ENCODE measurements at regions of chr20 and their contacts with region 1.

Region 1: DNA sequence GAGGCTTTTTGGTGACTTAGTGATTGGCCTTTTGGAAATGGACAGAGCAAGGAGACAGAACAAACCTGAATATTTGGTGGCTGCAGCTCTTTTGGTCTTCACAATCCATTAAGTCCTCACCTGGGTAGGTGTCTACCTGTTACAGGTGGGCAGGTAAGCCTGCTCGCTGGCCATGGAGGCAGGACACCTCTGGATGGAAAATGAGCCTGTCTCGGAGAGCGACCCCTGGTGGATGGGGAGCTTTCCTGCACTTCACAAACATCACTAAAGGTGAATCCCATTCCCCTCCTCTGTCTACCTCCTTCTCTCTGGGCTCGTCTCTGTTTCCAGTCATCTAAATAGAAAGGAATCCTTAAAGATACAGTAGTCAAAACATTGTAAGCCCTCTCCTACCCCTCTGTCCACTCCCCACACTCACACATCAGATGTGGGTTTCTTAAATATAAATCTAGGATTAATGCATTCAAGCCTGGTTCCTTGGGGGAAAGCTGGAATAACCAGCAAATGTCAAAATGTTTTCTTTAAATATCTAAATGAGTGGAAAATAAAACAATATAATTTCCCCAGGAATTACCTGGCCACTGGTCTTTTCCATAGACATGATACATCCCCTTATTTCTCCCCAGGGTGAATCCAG is 304.9 kb downstream of the CDH26 start:
- DNase-seq: peak; percentile 63
- H3K4me3 Mint-ChIP-seq: no peak overlapping the region
- H3K27ac Mint-ChIP-seq: no peak overlapping the region
- H3K4me1 Mint-ChIP-seq: peaks cover 11% of the 10 kb centered on the region
- H3K27me3 Mint-ChIP-seq: no peaks in the 10 kb centered on the region

Region 2: DNA sequence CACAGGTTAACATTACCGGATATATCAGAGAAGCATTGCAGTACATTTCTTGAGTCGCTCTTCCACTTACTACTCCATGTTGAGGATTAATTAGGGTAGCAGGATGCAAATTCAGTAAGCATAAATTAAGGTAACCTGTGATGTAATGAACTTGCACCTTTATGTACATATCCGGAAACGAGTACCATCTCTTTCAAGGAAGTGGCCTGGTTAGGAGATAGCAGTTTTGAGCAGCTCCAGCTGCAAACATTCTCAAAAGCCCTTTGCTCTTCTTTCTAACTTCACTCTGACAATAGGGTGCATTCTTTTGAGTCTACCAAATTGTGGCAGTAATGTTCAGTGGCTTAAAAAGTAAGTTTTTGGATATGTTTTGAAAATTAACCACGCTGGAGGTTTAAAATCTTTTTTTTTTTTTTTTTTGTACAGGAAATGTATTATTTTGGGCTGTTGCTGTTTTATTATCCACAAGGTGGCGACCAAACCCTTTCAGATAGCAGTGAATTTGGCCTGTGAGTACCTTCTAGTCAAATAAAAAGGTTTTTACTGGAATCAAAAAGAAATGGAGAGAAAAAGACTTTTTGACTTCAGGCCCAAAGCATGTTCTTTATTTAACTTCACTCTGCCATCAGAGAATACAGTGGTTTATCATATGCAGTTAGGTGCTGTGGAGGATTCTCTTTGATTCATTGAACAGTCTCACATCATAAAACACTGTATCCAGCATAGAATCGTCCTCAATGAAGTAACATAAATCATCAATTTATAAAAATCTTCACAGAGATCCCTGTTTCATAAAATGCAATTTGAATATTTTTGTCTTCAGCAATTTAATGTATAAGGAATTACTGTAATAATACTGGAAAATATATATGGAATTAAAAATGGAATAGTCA is 314.0 kb before region 1 on chr20:
- CTCF ChIA-PET with region 1: interaction called, 3 read pairs
- intact Hi-C with region 1: loop called (anchors 1 kb)
- DNase-seq: peak; percentile 56
- H3K4me3 Mint-ChIP-seq: no peak overlapping the region
- H3K27ac Mint-ChIP-seq: peak overlapping the region; percentile 93
- H3K4me1 Mint-ChIP-seq: peaks cover 23% of the 10 kb centered on the region
- H3K27me3 Mint-ChIP-seq: no peaks in the 10 kb centered on the region

Region 3: GRCh38 chr20:60137629-60138245 is 125.3 kb before region 1 on chr20:
- CTCF ChIA-PET with region 1: no interaction called
- intact Hi-C with region 1: loop called (anchors 2 kb)
- DNase-seq: peak; percentile 58
- H3K4me3 Mint-ChIP-seq: peak overlapping the region; percentile 60
- H3K27ac Mint-ChIP-seq: no peak overlapping the region
- H3K4me1 Mint-ChIP-seq: peaks cover 6% of the 10 kb centered on the region
- H3K27me3 Mint-ChIP-seq: no peaks in the 10 kb centered on the region

Region 4: DNA sequence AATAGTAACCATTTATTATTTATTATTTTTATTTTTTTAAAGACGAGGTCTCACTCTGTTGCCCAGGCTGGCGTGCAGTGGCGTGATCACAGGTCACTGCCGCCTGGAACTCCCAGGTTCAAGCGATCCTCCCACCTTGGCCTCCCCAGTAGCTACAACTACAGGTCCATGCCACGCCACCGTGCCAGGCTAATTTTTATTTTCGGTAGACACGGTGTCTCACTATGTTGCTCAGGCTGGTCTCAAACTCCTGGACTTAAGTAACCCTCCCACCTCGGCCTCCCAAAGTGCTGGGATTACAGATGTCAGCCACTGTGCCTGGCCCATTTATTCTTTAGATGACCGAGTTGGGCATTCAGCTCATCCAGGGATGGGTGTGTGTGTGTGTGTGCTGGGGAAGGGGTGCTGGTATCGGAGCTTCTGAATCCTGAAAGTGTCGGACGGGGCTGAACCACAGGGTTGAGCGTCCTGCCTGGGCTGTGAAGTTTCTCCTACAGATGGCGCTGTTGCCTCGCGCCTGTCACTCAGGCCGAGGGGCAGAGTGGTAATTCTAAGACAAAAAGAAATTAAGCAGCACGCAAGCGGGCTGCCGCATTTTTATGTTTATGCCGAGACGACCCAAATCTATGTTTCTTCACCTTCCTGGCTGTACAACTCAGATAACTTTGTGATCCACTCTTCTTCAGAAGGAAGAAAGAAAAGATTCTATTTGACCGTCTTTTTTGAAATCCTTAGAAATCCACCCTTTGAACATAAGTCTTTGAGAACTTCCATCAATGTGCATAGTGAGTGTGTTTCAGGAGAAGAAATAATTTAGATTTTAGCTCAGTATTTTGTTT is 52.1 kb before region 1 on chr20:
- CTCF ChIA-PET with region 1: interaction called, 6 read pairs
- intact Hi-C with region 1: loop called (anchors 5 kb)
- DNase-seq: peak; percentile 71
- H3K4me3 Mint-ChIP-seq: no peak overlapping the region
- H3K27ac Mint-ChIP-seq: no peak overlapping the region
- H3K4me1 Mint-ChIP-seq: peaks cover 3% of the 10 kb centered on the region
- H3K27me3 Mint-ChIP-seq: peaks cover 2% of the 10 kb centered on the region